IMR-90 (cell line): ENCODE measurements at regions of chr10 and their contacts with region 1.

Region 1: DNA sequence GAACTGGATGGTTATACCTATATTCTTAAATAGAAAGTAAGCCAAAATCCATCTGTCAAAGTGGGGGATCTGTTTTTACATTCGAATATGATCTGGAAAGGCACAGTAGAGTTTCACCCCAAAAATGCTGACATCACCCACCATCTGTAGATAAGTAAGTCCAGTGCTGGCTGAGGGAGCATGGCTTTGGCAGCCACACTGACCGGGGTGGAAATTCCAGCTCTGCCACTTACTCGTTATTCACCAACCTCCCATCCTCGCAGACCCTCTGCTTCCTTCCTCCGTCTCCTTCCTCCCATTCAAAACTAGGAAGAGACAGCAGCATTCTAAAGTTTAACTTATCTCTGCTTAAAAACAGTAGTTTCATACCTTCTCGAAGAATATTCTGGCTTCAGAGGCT is 84.9 kb upstream of the GATA3 start:
- DNase-seq: no peak
- ATAC-seq: no peak
- H3K4me3 ChIP-seq: no peak overlapping the region
- H3K27ac ChIP-seq: no peak overlapping the region
- H3K4me1 ChIP-seq: no peaks in the 10 kb centered on the region
- H3K27me3 ChIP-seq: no peaks in the 10 kb centered on the region
- CTCF ChIP-seq: no peak
- POLR2A ChIP-seq: no peak
- RAD21 ChIP-seq: no peak

Region 2: GRCh38 chr10:7855205-7855604 is 114.4 kb before region 1 on chr10:
- CTCF ChIA-PET with region 1: no interaction called
- POLR2A ChIA-PET with region 1: no interaction called
- dilution Hi-C with region 1: no loop called
- in situ Hi-C with region 1: no loop called
- intact Hi-C with region 1: no loop called
- DNase-seq: no peak
- ATAC-seq: no peak
- H3K4me3 ChIP-seq: no peak overlapping the region
- H3K27ac ChIP-seq: no peak overlapping the region
- H3K4me1 ChIP-seq: peaks cover 4% of the 10 kb centered on the region
- H3K27me3 ChIP-seq: no peaks in the 10 kb centered on the region
- CTCF ChIP-seq: no peak
- POLR2A ChIP-seq: no peak
- RAD21 ChIP-seq: no peak

Region 3: GRCh38 chr10:7984896-7985295 is 15.3 kb after region 1 on chr10:
- CTCF ChIA-PET with region 1: no interaction called
- POLR2A ChIA-PET with region 1: interaction called, 4 read pairs
- dilution Hi-C with region 1: no loop called
- in situ Hi-C with region 1: no loop called
- intact Hi-C with region 1: loop called (anchors 1 kb)
- DNase-seq: no peak
- ATAC-seq: no peak; the same call in 1 of the 2 replicates
- H3K4me3 ChIP-seq: no peak overlapping the region
- H3K27ac ChIP-seq: no peak overlapping the region
- H3K4me1 ChIP-seq: peaks cover 2% of the 10 kb centered on the region
- H3K27me3 ChIP-seq: no peaks in the 10 kb centered on the region
- CTCF ChIP-seq: no peak
- POLR2A ChIP-seq: no peak
- RAD21 ChIP-seq: no peak

Region 4: DNA sequence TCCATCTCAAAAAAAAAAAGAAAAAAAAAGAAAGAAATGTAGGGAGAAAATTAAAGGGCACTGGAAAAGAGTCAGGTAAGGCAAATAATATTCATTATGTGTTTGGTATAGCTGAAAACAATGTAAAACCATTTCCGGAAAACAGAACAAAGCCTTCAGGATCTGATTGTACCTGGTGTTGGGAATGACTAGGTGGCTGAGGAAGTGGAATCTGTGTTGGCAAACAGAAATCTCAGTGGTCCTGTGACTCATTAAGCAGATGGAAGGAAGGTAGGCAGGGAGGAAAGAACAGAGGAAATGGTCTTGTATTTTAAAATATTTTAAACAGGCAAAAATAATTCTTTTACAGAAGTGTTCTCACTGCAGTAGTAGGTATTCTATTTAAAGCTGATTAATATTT is 29.2 kb after region 1 on chr10:
- CTCF ChIA-PET with region 1: no interaction called
- POLR2A ChIA-PET with region 1: no interaction called
- dilution Hi-C with region 1: no loop called
- in situ Hi-C with region 1: no loop called
- intact Hi-C with region 1: loop called (anchors 1 kb)
- DNase-seq: no peak
- ATAC-seq: no peak
- H3K4me3 ChIP-seq: no peak overlapping the region
- H3K27ac ChIP-seq: no peak overlapping the region
- H3K4me1 ChIP-seq: no peaks in the 10 kb centered on the region
- H3K27me3 ChIP-seq: no peaks in the 10 kb centered on the region
- CTCF ChIP-seq: no peak
- POLR2A ChIP-seq: no peak
- RAD21 ChIP-seq: no peak

Region 5: GRCh38 chr10:8009031-8009430 is 39.4 kb after region 1 on chr10:
- CTCF ChIA-PET with region 1: no interaction called
- POLR2A ChIA-PET with region 1: no interaction called
- dilution Hi-C with region 1: no loop called
- in situ Hi-C with region 1: no loop called
- intact Hi-C with region 1: no loop called
- DNase-seq: no peak
- ATAC-seq: no peak
- H3K4me3 ChIP-seq: no peak overlapping the region
- H3K27ac ChIP-seq: no peak overlapping the region
- H3K4me1 ChIP-seq: no peaks in the 10 kb centered on the region
- H3K27me3 ChIP-seq: no peaks in the 10 kb centered on the region
- CTCF ChIP-seq: no peak
- POLR2A ChIP-seq: no peak
- RAD21 ChIP-seq: no peak